A549 (cell line): ENCODE measurements at regions of chr15 and their contacts with region 1.

Region 1: DNA sequence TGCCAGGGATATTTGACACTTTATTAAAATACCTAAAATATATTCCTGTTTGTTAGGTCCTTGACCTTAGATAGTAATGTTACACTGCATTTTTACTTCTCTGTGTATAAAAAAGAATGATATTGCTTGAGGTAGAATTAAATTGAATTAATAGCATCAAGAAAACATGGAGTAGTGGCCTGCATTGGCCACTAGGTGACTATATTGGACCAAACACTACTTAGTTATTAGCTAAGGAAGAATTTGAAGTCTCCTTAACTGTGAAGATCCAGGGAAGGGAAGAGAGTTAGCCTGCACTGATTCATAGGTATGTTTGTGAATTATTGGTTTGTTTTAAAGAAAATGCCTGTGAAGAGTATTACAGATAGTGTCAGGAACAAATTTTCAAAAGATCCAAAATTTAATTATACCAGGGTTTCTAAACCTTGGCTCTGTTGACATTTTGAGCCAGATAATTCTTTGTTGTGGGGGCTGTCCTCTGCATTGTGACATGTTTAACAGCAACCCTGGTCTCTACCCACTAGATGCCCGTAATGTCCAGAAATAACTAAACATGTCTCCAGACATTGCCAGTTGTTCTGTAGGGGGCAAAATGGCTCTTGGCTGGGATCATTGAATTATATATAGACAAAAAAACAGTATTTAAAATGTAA is 103.6 kb upstream of the THSD4 start:
- DNase-seq: peak; percentile 35 to 75
- ATAC-seq: peak; percentile 92 to 94
- H3K4me3 ChIP-seq: no peak overlapping the region
- H3K27ac ChIP-seq: peak overlapping the region; percentile 36 to 71; a peak in 4 of 6 replicates
- H3K4me1 ChIP-seq: peaks cover 6% of the 10 kb centered on the region
- CTCF ChIP-seq: peak; percentile 98
- EP300 ChIP-seq: no peak
- POLR2A ChIP-seq: no peak
- RAD21 ChIP-seq: peak; percentile 97 to 98

Region 2: GRCh38 chr15:70998319-70998718 is 13.3 kb before region 1 on chr15:
- CTCF ChIA-PET with region 1: interaction called, 16 read pairs
- POLR2A ChIA-PET with region 1: no interaction called
- DNase-seq: no peak
- ATAC-seq: no peak
- H3K4me3 ChIP-seq: no peak overlapping the region
- H3K27ac ChIP-seq: no peak overlapping the region
- H3K4me1 ChIP-seq: no peaks in the 10 kb centered on the region
- CTCF ChIP-seq: no peak
- EP300 ChIP-seq: no peak
- POLR2A ChIP-seq: no peak
- RAD21 ChIP-seq: no peak

Region 3: DNA sequence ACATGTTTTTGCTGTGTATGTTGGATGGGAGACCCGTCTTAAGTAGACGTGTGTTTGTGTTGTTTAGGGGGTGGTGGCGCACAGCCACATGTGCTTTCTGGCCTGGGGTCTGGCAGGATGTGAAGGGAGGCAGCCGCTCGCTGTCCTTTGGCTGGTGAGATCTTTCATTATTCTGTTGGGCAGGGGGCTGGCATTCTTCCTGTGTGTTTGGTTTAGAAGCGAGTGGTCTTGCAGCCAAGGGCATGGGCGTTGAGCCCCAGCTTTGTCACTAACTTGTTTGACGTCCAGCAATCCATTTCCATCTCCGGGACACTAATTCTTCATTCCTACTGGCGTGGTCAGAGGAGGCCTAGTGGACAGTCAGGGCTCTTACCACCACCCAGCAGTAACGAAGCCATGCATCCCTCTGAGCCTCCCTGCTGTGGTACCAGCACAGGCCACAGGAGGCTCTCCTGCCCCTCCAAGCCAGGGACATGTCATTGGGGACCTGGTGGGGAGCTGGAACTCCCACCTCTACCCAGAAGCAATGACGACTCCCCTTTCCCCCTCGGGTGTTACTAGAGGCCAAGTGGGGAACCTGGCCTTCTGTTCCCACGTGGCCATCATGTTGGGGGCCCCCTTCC is 114.3 kb after region 1 on chr15:
- CTCF ChIA-PET with region 1: no interaction called
- POLR2A ChIA-PET with region 1: no interaction called
- DNase-seq: peak; percentile 68 to 74
- ATAC-seq: peak; percentile 68 to 85; a peak in 5 of 6 replicates
- H3K4me3 ChIP-seq: no peak overlapping the region
- H3K27ac ChIP-seq: peak overlapping the region in 1 of 2 experiments; percentile 19; a peak in 3 of 6 replicates
- H3K4me1 ChIP-seq: peaks cover 39% of the 10 kb centered on the region
- CTCF ChIP-seq: no peak
- EP300 ChIP-seq: no peak
- POLR2A ChIP-seq: no peak
- RAD21 ChIP-seq: peak in 1 of 2 experiments; percentile 30; a peak in 2 of 5 replicates